ENCODE measurements at regions of chr14 and their contacts with region 1.

Region 1: DNA sequence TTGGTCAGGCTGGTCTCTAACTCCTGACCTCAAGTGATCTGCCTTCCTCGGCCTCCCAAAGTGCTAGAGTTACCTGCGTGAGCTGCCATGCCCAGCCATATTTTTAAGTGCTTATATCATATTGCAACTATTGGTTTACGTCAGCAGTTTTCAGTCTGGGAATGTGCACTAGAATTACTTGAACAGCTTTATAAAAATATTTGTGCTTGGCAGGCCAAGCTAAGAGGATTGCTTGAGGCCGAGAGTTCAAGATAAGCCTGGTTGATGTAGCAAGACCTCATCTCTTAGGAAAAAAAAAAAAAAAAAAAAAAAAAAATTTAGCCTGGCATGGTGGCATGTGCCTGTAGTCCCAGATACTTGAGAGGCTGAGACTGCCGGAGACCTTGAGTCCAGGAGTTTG is 17.1 kb downstream of the KIAA0586 start:
- DNase-seq: no peak
- ATAC-seq: no peak
- H3K4me3 ChIP-seq: no peak overlapping the region
- H3K4me3 Mint-ChIP-seq: no peak overlapping the region
- H3K27ac ChIP-seq: no peak overlapping the region
- H3K27ac Mint-ChIP-seq: no peak overlapping the region
- H3K4me1 ChIP-seq: no peaks in the 10 kb centered on the region
- H3K4me1 Mint-ChIP-seq: no peaks in the 10 kb centered on the region
- H3K27me3 ChIP-seq: no peaks in the 10 kb centered on the region
- H3K27me3 Mint-ChIP-seq: no peaks in the 10 kb centered on the region
- CTCF ChIP-seq: no peak

Region 2: DNA sequence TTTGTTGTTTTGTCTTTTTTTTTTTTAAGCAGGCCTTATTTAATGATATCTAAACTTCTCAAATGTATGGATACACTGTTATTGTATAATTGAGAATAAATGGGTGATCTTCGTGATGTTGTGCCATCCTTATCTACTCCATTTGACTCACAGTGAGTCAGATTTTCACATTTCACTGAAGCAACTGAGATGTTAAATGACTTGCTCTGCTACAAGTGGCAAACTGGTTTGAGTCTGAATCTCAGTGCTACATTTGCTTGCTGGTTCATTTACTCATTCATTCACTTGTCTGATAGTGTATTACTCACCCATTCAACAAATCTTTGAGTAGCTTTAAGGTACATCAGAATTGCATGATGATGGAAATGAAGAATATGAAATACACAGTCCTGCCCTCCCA is 14.5 kb before region 1 on chr14:
- CTCF ChIA-PET with region 1: no interaction called
- POLR2A ChIA-PET with region 1: no interaction called
- intact Hi-C with region 1: no loop called
- DNase-seq: no peak
- ATAC-seq: no peak
- H3K4me3 ChIP-seq: no peak overlapping the region
- H3K4me3 Mint-ChIP-seq: no peak overlapping the region
- H3K27ac ChIP-seq: no peak overlapping the region
- H3K27ac Mint-ChIP-seq: peak overlapping the region; percentile 51
- H3K4me1 ChIP-seq: peaks cover 15 to 19% of the 10 kb centered on the region in 2 donors
- H3K4me1 Mint-ChIP-seq: peaks cover 35% of the 10 kb centered on the region
- H3K27me3 ChIP-seq: no peaks in the 10 kb centered on the region
- H3K27me3 Mint-ChIP-seq: no peaks in the 10 kb centered on the region
- CTCF ChIP-seq: no peak

Region 3: DNA sequence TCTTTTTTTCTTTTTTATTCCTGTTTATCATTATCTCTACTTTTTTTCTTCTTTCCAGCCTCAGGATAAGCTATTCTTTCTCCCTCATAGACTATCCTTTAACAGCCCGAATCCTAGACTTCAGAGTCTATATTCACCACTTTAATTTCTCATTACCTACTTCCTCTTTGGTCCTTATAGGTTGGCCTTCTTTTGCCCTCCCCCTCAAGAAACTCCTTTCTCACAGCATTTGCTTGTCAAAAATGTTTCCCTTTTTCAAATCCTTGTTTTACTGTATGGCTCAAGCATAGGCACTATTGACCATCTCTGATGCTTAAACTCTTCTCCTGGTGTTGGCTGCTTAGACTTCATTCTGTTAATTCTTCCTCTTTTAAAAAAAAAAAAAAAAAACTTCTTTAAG is 35.3 kb after region 1 on chr14:
- CTCF ChIA-PET with region 1: no interaction called
- POLR2A ChIA-PET with region 1: interaction called, 11 read pairs
- intact Hi-C with region 1: no loop called
- DNase-seq: peak; percentile 16
- ATAC-seq: peak; percentile 43
- H3K4me3 ChIP-seq: no peak overlapping the region
- H3K4me3 Mint-ChIP-seq: no peak overlapping the region
- H3K27ac ChIP-seq: no peak overlapping the region
- H3K27ac Mint-ChIP-seq: no peak overlapping the region
- H3K4me1 ChIP-seq: peaks cover 0 to 3% of the 10 kb centered on the region in 2 donors
- H3K4me1 Mint-ChIP-seq: peaks cover 7% of the 10 kb centered on the region
- H3K27me3 ChIP-seq: no peaks in the 10 kb centered on the region
- H3K27me3 Mint-ChIP-seq: no peaks in the 10 kb centered on the region
- CTCF ChIP-seq: no peak

Measured in B cell (primary cell).